Activated T-helper 1 cell treated with anti-CD3 and anti-CD28 coated beads, Interleukin-12 subunit alpha, Interleukin-12 subunit beta, Interleukin-2, Interleukin-4 antibody, amounts not matched to agents 30 ng/mL and 10 ng/mL and 1 ng/mL, durations not matched to agents 14 hours and 24 hours and 36 hours (primary cell): ENCODE measurements at regions of chr10 and their contacts with region 1.

Region 1: DNA sequence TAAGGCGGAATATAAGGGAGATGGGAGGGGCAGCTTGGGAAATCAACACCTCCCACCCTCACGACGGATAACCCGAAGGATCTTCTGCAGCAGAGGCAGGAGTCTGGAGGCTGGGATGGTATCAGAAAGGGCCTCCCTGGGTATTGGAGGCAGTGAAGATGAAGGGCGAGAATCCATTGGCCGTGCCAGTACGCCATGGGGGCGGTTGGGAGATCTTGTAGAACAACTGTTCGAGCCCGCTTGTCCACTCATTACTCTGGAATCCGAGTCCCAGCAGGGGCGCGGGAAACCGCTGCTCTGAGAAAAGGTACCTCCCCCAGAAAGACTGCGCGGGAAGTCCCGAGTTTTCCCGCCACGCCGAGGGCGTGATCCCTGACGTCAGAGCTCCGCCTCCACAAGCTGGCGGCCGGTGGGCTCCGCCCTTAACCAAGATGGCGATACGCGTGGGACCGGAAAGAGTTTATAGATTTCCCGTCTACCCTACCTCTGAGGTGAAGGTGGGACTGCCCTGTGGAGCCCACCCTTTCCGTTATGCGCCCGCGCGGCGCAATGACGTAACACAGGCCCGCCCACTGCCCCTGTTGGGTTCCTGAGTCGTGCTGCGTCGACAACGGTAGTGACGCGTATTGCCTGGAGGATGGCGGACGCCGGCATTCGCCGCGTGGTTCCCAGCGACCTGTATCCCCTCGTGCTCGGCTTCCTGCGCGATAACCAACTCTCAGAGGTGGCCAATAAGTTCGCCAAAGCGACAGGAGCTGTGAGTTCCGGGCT is at the start of gene NOLC1:
- DNase-seq: peak; percentile 100
- H3K4me3 Mint-ChIP-seq: peak within 1 kb of the TSS; percentile 98
- H3K27ac Mint-ChIP-seq: peak within 1 kb of the TSS; percentile 98
- H3K4me1 Mint-ChIP-seq: peaks cover 28% of the 10 kb centered on the region
- H3K27me3 Mint-ChIP-seq: no peaks in the 10 kb centered on the region
- total RNA-seq, gene NOLC1: 260 and 271 TPM in 2 replicates

Region 2: GRCh38 chr10:101587725-101588653 is 564.0 kb before region 1 on chr10 and contains the starts of genes DPCD and POLL:
- intact Hi-C with region 1: loop called (anchors 5 kb)
- DNase-seq: peak; percentile 85
- H3K4me3 Mint-ChIP-seq: peak within 1 kb of the TSS; percentile 93
- H3K27ac Mint-ChIP-seq: peak within 1 kb of the TSS; percentile 81
- H3K4me1 Mint-ChIP-seq: peaks cover 24% of the 10 kb centered on the region
- H3K27me3 Mint-ChIP-seq: peaks cover 4% of the 10 kb centered on the region
- total RNA-seq, gene DPCD: 3.6 and 4.8 TPM in 2 replicates
- total RNA-seq, gene POLL: 32.4 and 33.5 TPM in 2 replicates

Region 3: DNA sequence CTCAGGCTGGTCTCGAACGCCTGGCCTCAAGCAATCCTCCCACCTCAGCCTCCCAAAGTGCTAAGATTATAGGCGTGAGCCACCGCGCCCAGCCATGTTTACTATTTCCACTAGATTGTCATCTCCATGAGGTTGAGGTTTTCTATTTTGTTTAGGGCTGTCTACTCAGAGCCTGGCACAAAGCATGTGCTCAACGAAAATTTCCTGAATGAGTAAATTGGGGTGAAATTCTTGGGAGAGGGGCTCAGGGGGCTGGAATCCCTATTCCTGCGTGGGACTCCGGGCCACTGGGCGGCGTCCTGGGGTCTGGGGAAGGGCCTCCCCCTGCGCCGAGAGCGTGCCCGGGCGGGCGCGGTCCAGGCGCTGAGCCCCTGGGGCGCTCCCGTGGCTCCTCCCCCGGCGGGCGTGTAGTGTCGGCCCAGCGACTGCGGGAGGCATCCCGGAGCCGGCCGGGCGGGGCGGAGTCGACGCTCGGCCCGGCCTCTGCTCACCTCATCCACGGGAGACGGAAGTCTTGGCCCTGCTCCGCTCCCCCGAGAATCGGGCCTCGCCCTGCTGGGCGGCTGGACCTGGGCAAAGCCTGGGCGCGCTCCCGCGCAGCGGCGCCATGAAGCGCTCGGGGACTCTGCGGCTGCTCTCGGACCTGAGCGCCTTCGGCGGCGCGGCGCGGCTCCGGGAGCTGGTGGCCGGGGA is 86.9 kb before region 1 on chr10 and contains the start of gene HPS6:
- intact Hi-C with region 1: loop called (anchors 1 kb)
- DNase-seq: peak; percentile 89
- H3K4me3 Mint-ChIP-seq: peak within 1 kb of the TSS; percentile 89
- H3K27ac Mint-ChIP-seq: peak within 1 kb of the TSS; percentile 90
- H3K4me1 Mint-ChIP-seq: peaks cover 17% of the 10 kb centered on the region
- H3K27me3 Mint-ChIP-seq: no peaks in the 10 kb centered on the region
- total RNA-seq, gene HPS6: 24.5 and 26.8 TPM in 2 replicates

Region 4: DNA sequence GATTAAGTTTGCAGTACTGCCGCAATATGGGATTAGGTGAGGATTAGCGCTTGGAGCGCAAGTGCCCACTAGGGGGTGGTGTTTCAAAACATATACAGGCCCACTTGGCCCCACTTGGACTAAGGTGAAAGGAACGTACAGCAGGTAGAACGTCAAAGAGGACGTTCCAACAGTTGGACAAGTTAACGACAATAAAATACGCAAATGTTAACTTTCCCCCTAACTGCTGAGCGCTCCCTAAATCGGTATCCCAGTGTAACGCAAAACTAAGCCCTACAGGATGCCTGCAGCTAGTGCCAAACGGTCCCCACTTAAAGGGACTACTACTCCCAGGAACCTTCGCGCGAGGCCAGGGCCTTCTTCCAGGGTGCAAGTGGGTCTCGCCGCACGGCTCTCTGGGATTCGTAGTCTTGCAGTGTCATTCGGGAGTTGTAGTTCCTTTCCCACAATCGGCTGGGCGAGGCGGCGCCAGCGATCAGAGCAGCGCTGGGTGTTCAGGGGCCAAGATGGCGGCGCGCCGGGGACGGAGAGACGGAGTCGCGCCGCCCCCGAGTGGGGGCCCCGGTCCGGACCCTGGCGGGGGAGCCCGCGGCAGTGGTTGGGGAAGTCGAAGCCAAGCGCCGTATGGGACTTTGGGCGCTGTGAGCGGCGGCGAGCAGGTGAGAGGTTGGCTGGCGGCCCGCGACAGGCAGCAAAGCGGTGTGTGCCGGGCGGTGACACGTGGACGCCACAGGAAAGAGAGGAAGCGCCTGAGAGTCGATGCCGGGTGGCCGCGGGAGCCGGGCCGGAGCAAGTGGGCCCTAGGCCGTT is 19.2 kb before region 1 on chr10 and contains the start of gene PPRC1:
- intact Hi-C with region 1: loop called (anchors 1 kb)
- DNase-seq: peak; percentile 97
- H3K4me3 Mint-ChIP-seq: peak within 1 kb of the TSS; percentile 95
- H3K27ac Mint-ChIP-seq: peak within 1 kb of the TSS; percentile 94
- H3K4me1 Mint-ChIP-seq: peaks cover 29% of the 10 kb centered on the region
- H3K27me3 Mint-ChIP-seq: no peaks in the 10 kb centered on the region
- total RNA-seq, gene PPRC1: 112 and 115 TPM in 2 replicates

Region 5: GRCh38 chr10:102399217-102400089 is 247.5 kb after region 1 on chr10:
- intact Hi-C with region 1: loop called (anchors 1 kb)
- DNase-seq: peak; percentile 86
- H3K4me3 Mint-ChIP-seq: peak overlapping the region; percentile 90
- H3K27ac Mint-ChIP-seq: peak overlapping the region; percentile 63
- H3K4me1 Mint-ChIP-seq: peaks cover 42% of the 10 kb centered on the region
- H3K27me3 Mint-ChIP-seq: no peaks in the 10 kb centered on the region

Region 6: DNA sequence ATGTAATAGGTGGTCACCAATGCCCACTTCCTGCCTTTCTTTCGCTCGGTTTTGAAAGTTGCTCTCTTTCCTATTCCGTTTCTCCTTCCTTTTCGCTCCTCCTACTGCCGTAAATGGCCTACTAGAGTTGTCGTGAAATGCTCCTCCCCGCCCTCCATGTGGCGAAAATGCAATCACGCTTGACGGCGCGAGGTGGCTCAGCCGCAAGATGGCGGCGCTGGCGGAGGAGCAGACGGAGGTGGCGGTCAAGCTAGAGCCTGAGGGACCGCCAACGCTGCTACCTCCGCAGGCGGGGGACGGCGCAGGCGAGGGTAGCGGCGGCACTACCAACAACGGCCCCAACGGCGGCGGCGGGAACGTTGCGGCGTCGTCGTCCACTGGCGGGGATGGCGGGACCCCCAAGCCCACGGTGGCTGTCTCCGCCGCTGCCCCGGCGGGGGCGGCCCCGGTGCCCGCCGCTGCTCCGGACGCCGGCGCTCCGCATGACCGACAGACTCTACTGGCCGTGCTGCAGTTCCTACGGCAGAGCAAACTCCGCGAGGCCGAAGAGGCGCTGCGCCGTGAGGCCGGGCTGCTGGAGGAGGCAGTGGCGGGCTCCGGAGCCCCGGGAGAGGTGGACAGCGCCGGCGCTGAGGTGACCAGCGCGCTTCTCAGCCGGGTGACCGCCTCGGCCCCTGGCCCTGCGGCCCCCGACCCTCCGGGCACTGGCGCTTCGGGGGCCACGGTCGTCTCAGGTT is 1216.0 kb after region 1 on chr10 and contains the start of gene TAF5:
- intact Hi-C with region 1: loop called (anchors 2 kb)
- DNase-seq: peak; percentile 89
- H3K4me3 Mint-ChIP-seq: peak within 1 kb of the TSS; percentile 89
- H3K27ac Mint-ChIP-seq: peak within 1 kb of the TSS; percentile 91
- H3K4me1 Mint-ChIP-seq: peaks cover 5% of the 10 kb centered on the region
- H3K27me3 Mint-ChIP-seq: no peaks in the 10 kb centered on the region
- total RNA-seq, gene TAF5: 10.4 and 11.0 TPM in 2 replicates